ENCODE measurements at regions of chr9 and their contacts with region 1.

Region 1: DNA sequence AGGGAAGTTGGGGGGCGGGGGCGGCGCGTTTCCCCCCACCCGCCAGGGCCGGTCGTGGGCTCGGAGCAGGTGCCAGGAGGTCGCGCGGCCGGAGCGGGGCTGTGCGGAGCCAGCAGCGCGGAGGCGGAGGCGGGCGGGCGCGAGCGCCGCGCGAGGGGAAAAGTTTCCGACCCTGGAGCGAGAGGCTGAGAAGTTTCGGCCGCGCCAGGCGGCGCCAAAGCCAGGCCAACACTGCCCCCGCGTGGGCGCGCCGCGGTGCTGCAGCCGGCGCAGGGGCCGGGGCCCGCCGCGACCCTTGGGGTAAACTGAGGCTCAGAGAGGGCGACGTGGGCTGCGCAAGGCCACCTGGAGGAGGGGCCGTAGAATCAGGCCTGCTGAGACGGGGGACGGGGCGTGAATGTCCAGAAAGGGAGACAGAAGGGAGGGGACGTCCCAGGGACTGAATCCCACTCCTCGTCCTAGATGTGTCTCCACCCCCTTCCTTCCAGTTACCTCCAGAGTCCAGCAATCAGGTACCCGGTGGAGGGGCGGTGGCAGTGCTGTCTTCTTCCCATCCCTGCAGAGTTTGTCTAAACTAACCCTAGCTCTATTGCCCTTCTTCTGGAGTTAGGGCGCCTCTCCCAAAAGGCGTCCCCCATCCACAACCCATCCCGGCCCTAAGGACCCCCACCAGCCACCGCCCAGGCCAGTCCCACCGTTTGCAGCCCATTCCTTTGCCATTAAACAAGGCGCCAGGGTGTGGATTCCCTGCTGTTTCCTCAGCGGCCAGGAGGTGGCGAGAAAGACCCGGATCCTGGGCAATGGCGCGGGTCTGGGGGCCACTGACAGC is 10.2 kb downstream of the C9orf50 start:
- DNase-seq: peak; percentile 78
- ATAC-seq: peak; percentile 66
- H3K4me3 Mint-ChIP-seq: peak overlapping the region; percentile 62
- H3K27ac Mint-ChIP-seq: peak overlapping the region; percentile 59
- H3K4me1 Mint-ChIP-seq: peaks cover 32% of the 10 kb centered on the region
- H3K27me3 Mint-ChIP-seq: no peaks in the 10 kb centered on the region
- CTCF ChIP-seq: peak; percentile 99

Region 2: DNA sequence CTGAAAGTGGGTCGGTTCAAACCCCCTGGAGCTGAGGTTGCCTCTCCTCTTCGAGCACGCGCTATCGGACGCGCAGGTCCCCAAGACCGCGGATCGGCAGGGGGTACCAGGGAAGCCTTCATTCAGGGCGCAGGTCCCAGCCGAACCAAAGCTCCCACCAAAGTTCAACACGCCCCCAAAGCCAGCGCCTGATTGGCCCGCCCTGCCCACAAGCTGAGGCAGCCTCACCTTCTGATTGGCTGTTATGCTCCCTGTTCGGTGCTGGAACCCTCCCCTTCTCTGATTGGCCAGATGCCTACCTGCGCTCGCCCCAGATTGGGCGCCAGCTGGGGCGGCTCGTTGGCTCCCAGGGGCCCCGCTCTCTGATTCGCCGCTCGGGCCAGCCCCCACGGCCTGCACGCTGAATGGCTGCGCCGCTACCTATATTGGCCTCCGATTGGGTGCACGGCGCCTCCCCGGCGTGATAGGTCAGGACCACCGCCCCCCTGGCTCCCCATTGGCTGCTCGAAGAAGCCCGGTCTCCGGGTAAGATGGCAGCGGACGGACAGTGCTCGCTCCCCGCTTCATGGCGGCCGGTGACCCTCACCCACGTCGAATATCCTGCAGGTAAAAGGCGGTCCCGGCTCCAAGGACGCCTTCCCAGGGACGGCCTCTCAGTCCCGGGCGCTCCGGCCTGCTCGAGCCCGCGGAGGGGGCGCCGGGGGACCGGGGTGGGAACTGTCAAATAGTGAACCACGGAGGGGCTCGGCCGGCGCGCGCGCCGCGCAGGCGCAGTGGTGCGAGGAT is 529.9 kb before region 1 on chr9 and contains the start of gene DOLPP1:
- CTCF ChIA-PET with region 1: no interaction called
- POLR2A ChIA-PET with region 1: no interaction called
- intact Hi-C with region 1: no loop called
- DNase-seq: peak; percentile 99
- ATAC-seq: peak; percentile 96
- H3K4me3 Mint-ChIP-seq: peak within 1 kb of the TSS; percentile 88
- H3K27ac Mint-ChIP-seq: peak within 1 kb of the TSS; percentile 78
- H3K4me1 Mint-ChIP-seq: peaks cover 21% of the 10 kb centered on the region
- H3K27me3 Mint-ChIP-seq: no peaks in the 10 kb centered on the region
- CTCF ChIP-seq: no peak
- total RNA-seq, gene DOLPP1: 12.7 to 15.2 TPM

Region 3: DNA sequence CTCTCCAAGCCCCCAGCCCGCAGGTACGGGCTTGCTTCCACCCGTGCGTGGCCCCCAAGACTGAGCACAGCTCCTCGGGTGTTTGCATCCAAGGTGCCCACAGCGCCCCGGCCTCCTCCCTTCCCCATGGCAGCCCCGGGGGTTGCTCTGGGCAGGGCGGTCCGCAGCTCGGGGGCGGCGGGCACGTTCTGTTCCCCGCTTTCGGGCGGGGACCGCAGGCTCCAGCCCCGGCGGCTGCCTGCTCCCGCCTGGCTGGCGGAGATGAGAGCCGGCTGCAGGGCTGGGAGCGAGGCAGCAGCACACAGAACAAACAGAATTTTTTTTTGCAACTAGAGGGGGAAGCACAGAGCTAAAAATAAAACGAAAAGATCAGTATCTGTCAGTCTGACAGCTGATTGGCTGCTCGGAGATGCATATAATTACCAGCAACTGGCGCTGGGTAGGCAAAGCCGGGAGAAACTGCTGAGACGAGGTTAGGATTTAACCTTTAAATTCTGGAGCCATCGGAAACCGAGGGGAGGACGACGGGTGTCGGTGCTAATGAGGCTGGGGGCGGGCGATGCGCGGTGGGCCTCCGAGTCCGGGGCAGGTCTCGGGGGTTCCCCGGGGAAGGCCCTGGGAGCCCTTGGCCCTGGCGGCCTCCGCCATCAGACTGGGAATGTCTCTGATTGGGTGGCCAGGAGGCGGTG is 290.0 kb before region 1 on chr9:
- CTCF ChIA-PET with region 1: interaction called, 5 read pairs
- POLR2A ChIA-PET with region 1: no interaction called
- intact Hi-C with region 1: loop called (anchors 10 kb)
- DNase-seq: peak; percentile 75
- ATAC-seq: peak; percentile 89
- H3K4me3 Mint-ChIP-seq: peak overlapping the region; percentile 72
- H3K27ac Mint-ChIP-seq: peak overlapping the region; percentile 85
- H3K4me1 Mint-ChIP-seq: peaks cover 26% of the 10 kb centered on the region
- H3K27me3 Mint-ChIP-seq: no peaks in the 10 kb centered on the region
- CTCF ChIP-seq: no peak

Region 4: DNA sequence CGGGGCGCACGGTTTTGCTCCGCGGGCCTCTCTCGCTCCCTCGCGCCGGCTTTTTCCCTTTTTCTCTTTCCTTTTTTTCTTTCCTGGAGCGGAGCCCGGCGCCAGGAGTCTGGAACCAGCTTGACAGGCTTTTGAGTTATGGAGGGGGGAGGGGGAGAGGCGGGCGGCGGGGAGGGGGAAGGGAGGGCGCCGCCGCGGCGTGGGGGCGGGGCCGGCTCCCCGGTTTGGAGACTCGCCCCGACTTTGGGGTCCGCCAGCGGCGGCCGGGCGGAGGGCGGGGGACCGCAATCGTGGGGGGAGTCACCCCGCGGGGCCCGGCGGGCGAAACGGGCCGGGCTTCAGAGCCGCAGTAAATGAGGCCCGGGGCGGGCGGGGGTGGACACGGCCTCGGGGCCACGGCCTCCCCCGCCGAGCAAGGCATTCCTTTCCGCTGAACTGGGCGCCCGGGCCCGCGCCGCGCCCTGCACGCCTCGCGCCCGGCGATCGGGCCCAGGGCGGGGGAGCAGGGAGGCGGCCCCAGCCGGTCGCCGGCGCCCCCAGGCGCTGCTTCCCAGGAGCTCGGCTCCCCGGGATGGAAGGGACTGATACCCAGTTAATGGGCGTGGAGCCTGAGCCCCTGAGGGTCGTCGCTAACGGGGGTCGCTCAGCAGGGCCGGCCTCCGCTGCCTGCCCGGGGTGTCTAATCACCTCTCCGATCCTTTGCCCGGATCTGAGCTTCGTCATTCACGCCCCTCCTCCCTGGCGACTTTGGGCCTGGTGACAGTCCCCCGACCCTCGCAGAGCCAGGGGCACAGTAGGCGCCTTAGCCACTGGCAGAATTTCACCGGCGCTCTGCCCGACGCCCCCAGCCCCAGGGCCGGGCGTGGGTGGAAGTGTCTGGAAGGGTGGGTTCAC is 127.9 kb before region 1 on chr9:
- CTCF ChIA-PET with region 1: no interaction called
- POLR2A ChIA-PET with region 1: no interaction called
- intact Hi-C with region 1: loop called (anchors 10 kb)
- DNase-seq: peak; percentile 53
- ATAC-seq: peak; percentile 37
- H3K4me3 Mint-ChIP-seq: peak overlapping the region; percentile 63
- H3K27ac Mint-ChIP-seq: peak overlapping the region; percentile 69
- H3K4me1 Mint-ChIP-seq: peaks cover 38% of the 10 kb centered on the region
- H3K27me3 Mint-ChIP-seq: peaks cover 7% of the 10 kb centered on the region
- CTCF ChIP-seq: no peak

Region 5: GRCh38 chr9:129584136-129584535 is 26.6 kb before region 1 on chr9:
- CTCF ChIA-PET with region 1: interaction called, 10 read pairs
- POLR2A ChIA-PET with region 1: interaction called, 5 read pairs
- intact Hi-C with region 1: no loop called
- DNase-seq: peak; percentile 80
- ATAC-seq: peak; percentile 36
- H3K4me3 Mint-ChIP-seq: no peak overlapping the region
- H3K27ac Mint-ChIP-seq: peak overlapping the region; percentile 73
- H3K4me1 Mint-ChIP-seq: peaks cover 68% of the 10 kb centered on the region
- H3K27me3 Mint-ChIP-seq: no peaks in the 10 kb centered on the region
- CTCF ChIP-seq: no peak